CD8-positive, alpha-beta T cell (primary cell): ENCODE measurements at regions of chr7 and their contacts with region 1.

Region 1: DNA sequence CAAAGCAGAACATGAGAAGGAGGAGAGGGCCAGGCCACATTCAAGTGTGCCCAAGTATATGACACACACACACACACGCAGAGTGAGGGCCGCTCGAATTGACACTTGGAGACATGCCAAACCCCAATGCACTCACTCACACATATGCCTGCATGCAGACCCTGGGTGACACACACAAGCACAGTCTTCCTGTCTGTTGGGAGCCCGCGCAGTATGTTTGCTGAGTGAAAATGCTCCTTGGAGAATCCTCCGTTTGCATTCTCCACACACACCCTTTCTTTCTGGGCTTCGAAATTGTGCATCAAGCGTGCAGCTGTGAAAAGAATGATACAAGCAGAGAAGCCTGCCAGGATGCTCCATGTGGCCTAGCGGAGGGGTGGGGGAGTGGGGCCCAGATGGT is 120.9 kb downstream of the PLXNA4 start:
- DNase-seq: peak in 8 of 9 experiments; percentile 21 to 76 (median 58)
- ATAC-seq: peak; percentile 74
- H3K4me3 ChIP-seq: no peak overlapping the region
- H3K4me3 Mint-ChIP-seq: peak overlapping the region; percentile 46
- H3K27ac ChIP-seq: no peak overlapping the region
- H3K27ac Mint-ChIP-seq: peak overlapping the region; percentile 39
- H3K4me1 ChIP-seq: peaks cover 56% of the 10 kb centered on the region
- H3K4me1 Mint-ChIP-seq: peaks cover 55% of the 10 kb centered on the region
- H3K27me3 ChIP-seq: no peaks in the 10 kb centered on the region
- H3K27me3 Mint-ChIP-seq: no peaks in the 10 kb centered on the region
- CTCF ChIP-seq: no peak

Region 2: GRCh38 chr7:132154248-132154647 is 301.1 kb before region 1 on chr7:
- CTCF ChIA-PET with region 1: no interaction called
- POLR2A ChIA-PET with region 1: no interaction called
- intact Hi-C with region 1: no loop called
- DNase-seq: no peak
- ATAC-seq: no peak
- H3K4me3 ChIP-seq: no peak overlapping the region
- H3K4me3 Mint-ChIP-seq: no peak overlapping the region
- H3K27ac ChIP-seq: no peak overlapping the region
- H3K27ac Mint-ChIP-seq: no peak overlapping the region
- H3K4me1 ChIP-seq: no peaks in the 10 kb centered on the region
- H3K4me1 Mint-ChIP-seq: no peaks in the 10 kb centered on the region
- H3K27me3 ChIP-seq: peaks cover 0 to 2% of the 10 kb centered on the region in 2 experiments
- H3K27me3 Mint-ChIP-seq: peaks cover 6% of the 10 kb centered on the region
- CTCF ChIP-seq: no peak

Region 3: GRCh38 chr7:132410385-132410784 is 45.0 kb before region 1 on chr7:
- CTCF ChIA-PET with region 1: no interaction called
- POLR2A ChIA-PET with region 1: no interaction called
- intact Hi-C with region 1: no loop called
- DNase-seq: no peak
- ATAC-seq: no peak
- H3K4me3 ChIP-seq: no peak overlapping the region
- H3K4me3 Mint-ChIP-seq: no peak overlapping the region
- H3K27ac ChIP-seq: no peak overlapping the region
- H3K27ac Mint-ChIP-seq: no peak overlapping the region
- H3K4me1 ChIP-seq: no peaks in the 10 kb centered on the region
- H3K4me1 Mint-ChIP-seq: no peaks in the 10 kb centered on the region
- H3K27me3 ChIP-seq: no peaks in the 10 kb centered on the region
- H3K27me3 Mint-ChIP-seq: no peaks in the 10 kb centered on the region
- CTCF ChIP-seq: no peak

Region 4: DNA sequence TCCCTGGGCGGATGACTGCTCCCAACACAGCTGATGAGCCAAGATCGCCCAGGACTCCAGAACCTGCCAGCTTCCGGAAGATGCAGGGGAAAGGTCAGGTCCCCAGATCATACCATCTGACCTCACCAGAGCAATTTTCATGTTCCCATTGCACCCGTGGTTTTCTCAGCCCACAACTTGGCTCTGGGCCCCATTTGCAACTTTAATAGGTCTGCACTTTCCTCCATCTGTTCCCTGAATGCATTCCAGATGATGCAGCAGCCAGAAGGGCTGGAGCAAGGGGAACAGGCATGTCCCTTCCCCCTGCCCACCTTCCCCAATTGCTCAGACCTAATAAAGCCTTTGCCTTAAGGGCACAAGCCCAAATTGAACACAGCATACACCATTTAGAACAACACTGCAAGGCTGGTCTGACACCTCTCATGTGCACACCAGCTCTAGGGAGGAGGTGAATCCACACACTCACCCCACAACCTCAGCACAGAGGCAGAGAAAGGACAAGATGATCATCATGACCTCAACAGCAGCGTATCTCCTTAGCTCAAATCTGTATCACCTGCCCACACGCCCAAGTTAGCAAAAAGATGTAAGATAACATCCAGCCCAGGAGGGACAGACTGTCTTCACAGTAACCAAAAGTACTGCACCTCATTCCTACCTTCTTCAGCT is 33.4 kb after region 1 on chr7:
- CTCF ChIA-PET with region 1: no interaction called
- POLR2A ChIA-PET with region 1: no interaction called
- intact Hi-C with region 1: loop called (anchors 1 to 5 kb)
- DNase-seq: peak in 2 of 9 experiments; percentile 25 to 55
- ATAC-seq: no peak
- H3K4me3 ChIP-seq: no peak overlapping the region
- H3K4me3 Mint-ChIP-seq: no peak overlapping the region
- H3K27ac ChIP-seq: no peak overlapping the region
- H3K27ac Mint-ChIP-seq: no peak overlapping the region
- H3K4me1 ChIP-seq: peaks cover 54% of the 10 kb centered on the region
- H3K4me1 Mint-ChIP-seq: peaks cover 57% of the 10 kb centered on the region
- H3K27me3 ChIP-seq: no peaks in the 10 kb centered on the region
- H3K27me3 Mint-ChIP-seq: no peaks in the 10 kb centered on the region
- CTCF ChIP-seq: no peak